ENCODE measurements at regions of chr14 and their contacts with region 1.

Region 1: DNA sequence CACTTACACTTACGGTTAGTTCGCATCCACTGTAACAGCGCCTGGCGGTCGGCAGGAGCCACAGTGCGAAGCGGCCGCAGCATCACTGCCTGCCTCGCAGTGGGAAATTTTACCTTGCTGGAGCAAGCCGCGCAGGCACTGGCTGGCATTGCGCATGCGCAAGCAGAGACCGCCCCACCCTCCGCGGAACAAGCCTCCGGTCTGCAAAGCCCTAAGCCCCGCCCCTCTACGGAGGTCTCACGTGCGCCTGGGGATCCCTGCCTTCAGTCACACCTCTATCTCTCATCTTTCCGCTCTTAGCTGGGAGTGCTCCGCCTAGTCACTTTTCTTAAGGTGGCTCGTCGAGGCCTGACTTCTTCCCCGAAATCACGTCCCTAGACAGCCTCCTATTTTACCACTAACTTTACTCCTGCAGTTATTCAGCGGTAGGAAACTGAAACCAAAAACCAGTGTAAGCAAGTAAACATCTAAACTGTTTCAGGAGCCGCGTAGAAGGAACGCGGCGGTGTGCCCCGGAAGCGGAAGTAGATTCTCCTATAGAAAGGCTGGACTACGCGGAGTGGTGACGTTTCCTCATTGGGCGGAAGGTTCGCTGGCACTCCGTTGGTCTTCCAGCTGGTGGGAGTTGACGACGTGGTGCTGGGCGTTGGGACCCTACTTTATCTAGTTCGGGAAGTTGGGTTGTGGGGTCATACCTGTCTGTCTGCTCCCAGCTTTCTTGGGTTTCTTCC is at the start of gene SRP54:
- DNase-seq: peak; percentile 96 to 100 (median 100)
- ATAC-seq: peak; percentile 92
- H3K4me3 Mint-ChIP-seq: no peak within 1 kb of the TSS
- H3K27ac Mint-ChIP-seq: no peak within 1 kb of the TSS
- H3K4me1 Mint-ChIP-seq: peaks cover 15 to 28% (median 17%) of the 10 kb centered on the region in 4 donors
- H3K27me3 Mint-ChIP-seq: no peaks in the 10 kb centered on the region
- polyA plus RNA-seq, gene SRP54: 18.3 to 32.2 (median 30.6) TPM

Region 2: GRCh38 chr14:34875031-34875922 is 107.3 kb before region 1 on chr14 and contains the start of gene BAZ1A:
- POLR2A ChIA-PET with region 1: interaction called, 82 read pairs
- DNase-seq: peak in 9 of 10 donors; percentile 2 to 68 (median 28)
- ATAC-seq: peak in 1 of 2 donors; percentile 18
- H3K4me3 Mint-ChIP-seq: peak within 1 kb of the TSS; percentile 98 to 100 (median 100)
- H3K27ac Mint-ChIP-seq: peak within 1 kb of the TSS; percentile 96 to 100 (median 99)
- H3K4me1 Mint-ChIP-seq: peaks cover 16 to 41% (median 30%) of the 10 kb centered on the region in 4 donors
- H3K27me3 Mint-ChIP-seq: no peaks in the 10 kb centered on the region
- polyA plus RNA-seq, gene BAZ1A: 8.5 to 10.7 (median 9.1) TPM

Region 3: DNA sequence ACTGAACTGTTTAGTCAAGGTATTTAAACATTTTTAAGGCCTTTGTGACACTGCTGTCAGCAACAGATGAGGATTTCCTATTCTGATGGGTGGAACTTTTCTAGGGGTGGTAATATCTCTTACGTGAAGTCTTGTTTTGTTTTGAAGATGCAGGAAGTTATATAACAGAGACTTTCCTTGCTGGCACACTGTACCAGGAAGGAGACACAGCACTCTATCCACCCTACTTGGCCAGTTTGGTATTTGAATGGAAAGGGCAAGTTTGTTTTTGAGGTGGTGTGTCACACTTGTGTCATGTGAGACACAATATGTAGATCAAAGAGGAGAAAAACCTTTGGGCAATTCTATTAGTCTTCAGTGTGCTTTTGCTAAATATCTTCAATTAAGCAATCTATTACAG is 51.4 kb before region 1 on chr14:
- POLR2A ChIA-PET with region 1: interaction called, 32 read pairs
- DNase-seq: peak in 9 of 10 donors; percentile 19 to 86 (median 61)
- ATAC-seq: peak; percentile 92 to 95
- H3K4me3 Mint-ChIP-seq: peak overlapping the region; percentile 6 to 81 (median 63)
- H3K27ac Mint-ChIP-seq: peak overlapping the region; percentile 93 to 99 (median 97)
- H3K4me1 Mint-ChIP-seq: peaks cover 13 to 37% (median 31%) of the 10 kb centered on the region in 4 donors
- H3K27me3 Mint-ChIP-seq: no peaks in the 10 kb centered on the region

Region 4: GRCh38 chr14:35046048-35046741 is 63.6 kb after region 1 on chr14 and contains the start of gene FAM177A1:
- POLR2A ChIA-PET with region 1: interaction called, 56 read pairs
- DNase-seq: peak; percentile 93 to 100 (median 99)
- ATAC-seq: peak; percentile 81 to 89
- H3K4me3 Mint-ChIP-seq: peak within 1 kb of the TSS; percentile 83 to 98 (median 96)
- H3K27ac Mint-ChIP-seq: peak within 1 kb of the TSS; percentile 98 to 100 (median 99)
- H3K4me1 Mint-ChIP-seq: peaks cover 5 to 33% (median 30%) of the 10 kb centered on the region in 4 donors
- H3K27me3 Mint-ChIP-seq: no peaks in the 10 kb centered on the region
- polyA plus RNA-seq, gene FAM177A1: 32.6 to 59.8 (median 41.0) TPM

Region 5: GRCh38 chr14:35121887-35122695 is 139.5 kb after region 1 on chr14 and contains the starts of genes PPP2R3C and PRORP:
- POLR2A ChIA-PET with region 1: interaction called, 24 read pairs
- DNase-seq: peak; percentile 77 to 98 (median 92)
- ATAC-seq: peak; percentile 83 to 85
- H3K4me3 Mint-ChIP-seq: peak within 1 kb of the TSS; percentile 98 to 100 (median 100)
- H3K27ac Mint-ChIP-seq: peak within 1 kb of the TSS; percentile 99 to 100 (median 100)
- H3K4me1 Mint-ChIP-seq: peaks cover 31 to 86% (median 74%) of the 10 kb centered on the region in 4 donors
- H3K27me3 Mint-ChIP-seq: no peaks in the 10 kb centered on the region
- polyA plus RNA-seq, gene PPP2R3C: 45.6 to 57.9 (median 52.7) TPM
- polyA plus RNA-seq, gene PRORP: 44.3 to 55.4 (median 49.7) TPM

Measured in naive thymus-derived CD8-positive, alpha-beta T cell (primary cell).